PC-3 (cell line): ENCODE measurements at regions of chr11 and their contacts with region 1.

Region 1: GRCh38 chr11:126310228-126310991 is 6.5 kb downstream of the DCPS start:
- DNase-seq: peak; percentile 87
- ATAC-seq: peak; percentile 82
- H3K4me3 ChIP-seq: no peak overlapping the region
- H3K27ac ChIP-seq: peak overlapping the region; percentile 23
- H3K4me1 ChIP-seq: peaks cover 29% of the 10 kb centered on the region
- H3K27me3 ChIP-seq: no peaks in the 10 kb centered on the region
- CTCF ChIP-seq: peak; percentile 98

Region 2: GRCh38 chr11:126246636-126247035 is 63.8 kb before region 1 on chr11:
- CTCF ChIA-PET with region 1: no interaction called
- POLR2A ChIA-PET with region 1: no interaction called
- intact Hi-C with region 1: no loop called
- DNase-seq: no peak
- ATAC-seq: no peak
- H3K4me3 ChIP-seq: no peak overlapping the region
- H3K27ac ChIP-seq: no peak overlapping the region
- H3K4me1 ChIP-seq: no peaks in the 10 kb centered on the region
- H3K27me3 ChIP-seq: no peaks in the 10 kb centered on the region
- CTCF ChIP-seq: no peak

Region 3: GRCh38 chr11:126332131-126332711 is 21.8 kb after region 1 on chr11:
- CTCF ChIA-PET with region 1: no interaction called
- POLR2A ChIA-PET with region 1: no interaction called
- intact Hi-C with region 1: no loop called
- DNase-seq: peak; percentile 95
- ATAC-seq: peak; percentile 96
- H3K4me3 ChIP-seq: no peak overlapping the region
- H3K27ac ChIP-seq: peak overlapping the region; percentile 83
- H3K4me1 ChIP-seq: peaks cover 28% of the 10 kb centered on the region
- H3K27me3 ChIP-seq: no peaks in the 10 kb centered on the region
- CTCF ChIP-seq: no peak

Region 4: GRCh38 chr11:126366065-126366785 is 55.8 kb after region 1 on chr11:
- CTCF ChIA-PET with region 1: no interaction called
- POLR2A ChIA-PET with region 1: no interaction called
- intact Hi-C with region 1: loop called (anchors 5 kb)
- DNase-seq: no peak
- ATAC-seq: no peak; the same call in 1 of the 2 replicates
- H3K4me3 ChIP-seq: no peak overlapping the region
- H3K27ac ChIP-seq: peak overlapping the region; percentile 21
- H3K4me1 ChIP-seq: peaks cover 25% of the 10 kb centered on the region
- H3K27me3 ChIP-seq: no peaks in the 10 kb centered on the region
- CTCF ChIP-seq: no peak

Region 5: GRCh38 chr11:126440792-126441514 is 130.5 kb after region 1 on chr11:
- CTCF ChIA-PET with region 1: interaction called, 3 read pairs
- POLR2A ChIA-PET with region 1: no interaction called
- intact Hi-C with region 1: loop called (anchors 1 kb)
- DNase-seq: peak; percentile 94
- ATAC-seq: peak; percentile 88
- H3K4me3 ChIP-seq: peak overlapping the region; percentile 34; the same call in 1 of the 2 replicates
- H3K27ac ChIP-seq: no peak overlapping the region
- H3K4me1 ChIP-seq: peaks cover 5% of the 10 kb centered on the region; the same call in 1 of the 2 replicates
- H3K27me3 ChIP-seq: no peaks in the 10 kb centered on the region
- CTCF ChIP-seq: peak; percentile 98

Region 6: GRCh38 chr11:126989942-126990715 is 679.7 kb after region 1 on chr11:
- CTCF ChIA-PET with region 1: no interaction called
- POLR2A ChIA-PET with region 1: no interaction called
- intact Hi-C with region 1: loop called (anchors 1 kb)
- DNase-seq: peak; percentile 77
- ATAC-seq: peak; percentile 93
- H3K4me3 ChIP-seq: no peak overlapping the region
- H3K27ac ChIP-seq: no peak overlapping the region
- H3K4me1 ChIP-seq: peaks cover 26% of the 10 kb centered on the region
- H3K27me3 ChIP-seq: peaks cover 49% of the 10 kb centered on the region
- CTCF ChIP-seq: peak; percentile 94